Endothelial cell of umbilical vein (primary cell): ENCODE measurements at regions of chr9 and their contacts with region 1.

Region 1: DNA sequence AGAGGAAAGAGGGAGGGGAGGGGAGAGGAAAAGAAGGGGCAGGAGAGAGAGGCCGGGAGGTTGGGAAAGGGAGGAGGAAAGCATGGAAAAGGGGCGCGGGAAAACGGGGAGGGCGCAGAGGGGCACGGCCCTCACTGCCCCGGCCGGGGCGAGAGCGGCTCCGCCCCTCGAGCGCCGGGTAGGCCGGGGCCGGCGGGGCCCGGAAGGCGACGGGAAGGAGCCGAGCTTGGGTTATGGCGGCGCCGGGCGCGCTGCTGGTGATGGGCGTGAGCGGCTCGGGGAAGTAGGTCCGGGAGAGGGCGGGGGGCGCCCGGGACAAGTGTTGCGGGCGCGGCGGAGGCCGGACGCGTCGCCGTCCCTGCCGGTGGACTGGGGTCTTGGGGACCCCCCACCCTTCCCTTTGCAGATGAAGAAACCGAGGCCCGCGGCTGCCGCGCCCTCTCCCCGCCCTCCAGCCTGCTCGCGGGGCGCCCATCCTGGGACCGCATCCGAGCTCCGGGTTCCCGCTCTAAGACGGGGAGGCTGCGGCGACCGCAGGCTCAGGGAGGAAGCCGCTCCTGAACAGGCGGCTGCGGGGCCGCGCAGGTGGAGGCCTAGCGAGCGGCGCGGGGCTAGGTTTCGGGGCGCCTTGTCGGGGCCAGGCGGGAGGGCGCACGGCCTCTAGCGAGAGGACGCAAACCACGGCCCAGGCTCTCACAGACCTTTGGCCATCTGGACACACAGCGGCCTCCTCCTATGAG is at the start of gene IDNK:
- DNase-seq: peak; percentile 53
- H3K4me3 ChIP-seq: peak within 1 kb of the TSS; percentile 71 to 83 (median 81)
- H3K27ac ChIP-seq: peak within 1 kb of the TSS; percentile 68
- H3K4me1 ChIP-seq: peaks cover 10% of the 10 kb centered on the region
- H3K27me3 ChIP-seq: peaks cover 1 to 3% of the 10 kb centered on the region in 2 experiments
- CTCF ChIP-seq: no peak
- POLR2A ChIP-seq: peak; percentile 26
- total RNA-seq, gene IDNK: 3.4 and 4.5 TPM in 2 replicates

Region 2: DNA sequence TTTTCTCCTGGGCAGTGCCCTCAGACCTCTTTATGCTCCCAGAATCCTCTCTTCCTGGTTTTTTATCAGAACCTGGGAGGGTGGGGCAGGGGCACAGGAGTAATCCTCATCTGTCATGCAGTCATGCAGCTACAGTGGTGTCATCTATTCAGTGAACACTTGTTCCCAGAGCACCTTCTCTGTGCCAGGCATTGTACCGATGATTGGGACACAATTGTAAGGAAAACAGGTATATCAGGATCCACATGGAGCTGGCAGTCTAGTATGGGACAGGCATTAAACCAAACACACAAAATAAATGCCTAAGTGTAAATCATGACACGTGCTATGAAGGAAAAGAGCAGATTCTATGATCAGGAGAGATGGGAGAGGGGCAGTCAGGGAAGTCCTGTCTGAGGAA is 21.6 kb before region 1 on chr9:
- CTCF ChIA-PET with region 1: no interaction called
- POLR2A ChIA-PET with region 1: no interaction called
- dilution Hi-C with region 1: no loop called
- intact Hi-C with region 1: no loop called
- DNase-seq: no peak
- H3K4me3 ChIP-seq: no peak overlapping the region
- H3K27ac ChIP-seq: no peak overlapping the region
- H3K4me1 ChIP-seq: no peaks in the 10 kb centered on the region
- H3K27me3 ChIP-seq: no peaks in the 10 kb centered on the region
- CTCF ChIP-seq: no peak
- POLR2A ChIP-seq: no peak

Region 3: DNA sequence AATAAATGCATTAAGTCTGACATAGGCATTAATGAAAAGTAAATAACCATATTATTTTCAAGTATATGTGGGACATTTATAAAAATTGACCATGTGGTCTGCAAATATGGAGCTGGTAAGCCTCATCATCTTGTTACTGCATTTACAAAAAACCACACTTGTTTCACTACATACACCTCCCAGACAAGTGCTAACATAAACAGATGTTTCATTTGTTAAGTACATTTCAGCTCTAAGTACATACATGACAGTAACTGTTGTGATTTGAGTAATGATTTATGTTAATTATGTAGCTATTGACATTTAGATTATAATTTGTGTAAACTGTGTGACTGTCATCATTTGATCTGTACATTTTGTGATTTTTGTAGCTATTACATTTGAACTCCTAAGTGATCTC is 13.7 kb after region 1 on chr9:
- CTCF ChIA-PET with region 1: interaction called, 20 read pairs
- POLR2A ChIA-PET with region 1: no interaction called
- dilution Hi-C with region 1: no loop called
- intact Hi-C with region 1: no loop called
- DNase-seq: no peak
- H3K4me3 ChIP-seq: no peak overlapping the region
- H3K27ac ChIP-seq: no peak overlapping the region
- H3K4me1 ChIP-seq: no peaks in the 10 kb centered on the region
- H3K27me3 ChIP-seq: no peaks in the 10 kb centered on the region
- CTCF ChIP-seq: no peak
- POLR2A ChIP-seq: no peak

Region 4: GRCh38 chr9:83665580-83666200 is 42.6 kb after region 1 on chr9:
- CTCF ChIA-PET with region 1: interaction called, 17 read pairs
- POLR2A ChIA-PET with region 1: no interaction called
- dilution Hi-C with region 1: no loop called
- intact Hi-C with region 1: loop called (anchors 1 kb)
- DNase-seq: peak; percentile 83
- H3K4me3 ChIP-seq: peak overlapping the region in 1 of 3 experiments; percentile 13
- H3K27ac ChIP-seq: peak overlapping the region; percentile 87
- H3K4me1 ChIP-seq: peaks cover 31% of the 10 kb centered on the region
- H3K27me3 ChIP-seq: no peaks in the 10 kb centered on the region
- CTCF ChIP-seq: no peak
- POLR2A ChIP-seq: no peak

Region 5: GRCh38 chr9:83714329-83714728 is 91.2 kb after region 1 on chr9:
- CTCF ChIA-PET with region 1: interaction called, 25 read pairs
- POLR2A ChIA-PET with region 1: no interaction called
- dilution Hi-C with region 1: no loop called
- intact Hi-C with region 1: loop called (anchors 1 kb)
- DNase-seq: peak; percentile 38
- H3K4me3 ChIP-seq: no peak overlapping the region
- H3K27ac ChIP-seq: no peak overlapping the region
- H3K4me1 ChIP-seq: no peaks in the 10 kb centered on the region
- H3K27me3 ChIP-seq: no peaks in the 10 kb centered on the region
- CTCF ChIP-seq: peak; percentile 14 to 38
- POLR2A ChIP-seq: no peak

Region 6: GRCh38 chr9:84261082-84261746 is 638.1 kb after region 1 on chr9:
- CTCF ChIA-PET with region 1: interaction called, 3 read pairs
- POLR2A ChIA-PET with region 1: no interaction called
- dilution Hi-C with region 1: no loop called
- intact Hi-C with region 1: loop called (anchors 5 kb)
- DNase-seq: peak; percentile 80
- H3K4me3 ChIP-seq: no peak overlapping the region
- H3K27ac ChIP-seq: no peak overlapping the region
- H3K4me1 ChIP-seq: no peaks in the 10 kb centered on the region
- H3K27me3 ChIP-seq: peaks cover 10 to 24% of the 10 kb centered on the region in 2 experiments
- CTCF ChIP-seq: peak; percentile 83 to 89
- POLR2A ChIP-seq: no peak